Gastrocnemius medialis (tissue), 4 donors: ENCODE measurements at regions of chr16 and their contacts with region 1.

Region 1: DNA sequence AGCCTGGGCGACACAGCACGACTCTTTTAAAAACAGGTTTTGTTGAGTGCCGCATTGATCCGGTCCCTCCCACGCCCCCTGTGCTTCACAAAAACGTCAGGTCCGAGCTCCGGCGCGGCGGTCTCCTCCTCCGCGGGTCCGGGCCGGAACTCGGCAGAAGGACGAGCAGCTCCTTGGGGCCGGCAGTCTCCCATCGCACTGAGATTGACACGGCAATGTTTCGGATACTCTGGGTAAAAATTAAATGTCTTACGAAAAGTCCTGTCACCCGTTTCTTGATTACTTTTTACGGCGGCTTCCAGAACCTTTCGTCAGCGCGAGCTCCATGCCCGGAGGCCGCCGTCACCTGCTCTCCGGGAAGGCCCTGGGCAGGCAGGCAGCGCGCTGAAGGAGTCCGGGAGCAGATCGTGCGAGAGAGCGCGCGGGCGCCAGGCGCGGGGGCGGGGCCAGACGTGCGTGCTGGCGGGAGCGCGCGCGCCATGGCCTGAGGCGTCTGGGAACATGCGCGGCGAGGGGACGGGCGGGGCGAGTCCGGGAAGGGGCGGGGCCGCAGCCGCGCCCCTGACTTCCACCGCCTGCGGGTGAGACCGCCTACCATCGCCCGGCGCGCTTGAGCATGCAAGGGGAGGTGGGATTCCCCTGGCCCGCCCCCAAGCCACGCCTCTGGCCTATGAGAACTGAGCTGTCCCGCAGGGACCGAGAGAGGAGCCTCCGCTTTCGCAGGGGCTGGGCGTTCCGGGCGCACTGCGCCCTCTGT is 11.7 kb upstream of the SRL start:
- DNase-seq: peak; percentile 98 to 100
- ATAC-seq: peak; percentile 91 to 92
- H3K4me3 ChIP-seq: peak overlapping the region; percentile 72 to 77 (median 74)
- H3K27ac ChIP-seq: peak overlapping the region; percentile 94 to 96 (median 96)
- H3K4me1 ChIP-seq: peaks cover 9 to 15% of the 10 kb centered on the region in 2 donors
- H3K27me3 ChIP-seq: no peaks in the 10 kb centered on the region
- CTCF ChIP-seq: no peak
- POLR2A ChIP-seq: peak; percentile 87 to 88

Region 2: DNA sequence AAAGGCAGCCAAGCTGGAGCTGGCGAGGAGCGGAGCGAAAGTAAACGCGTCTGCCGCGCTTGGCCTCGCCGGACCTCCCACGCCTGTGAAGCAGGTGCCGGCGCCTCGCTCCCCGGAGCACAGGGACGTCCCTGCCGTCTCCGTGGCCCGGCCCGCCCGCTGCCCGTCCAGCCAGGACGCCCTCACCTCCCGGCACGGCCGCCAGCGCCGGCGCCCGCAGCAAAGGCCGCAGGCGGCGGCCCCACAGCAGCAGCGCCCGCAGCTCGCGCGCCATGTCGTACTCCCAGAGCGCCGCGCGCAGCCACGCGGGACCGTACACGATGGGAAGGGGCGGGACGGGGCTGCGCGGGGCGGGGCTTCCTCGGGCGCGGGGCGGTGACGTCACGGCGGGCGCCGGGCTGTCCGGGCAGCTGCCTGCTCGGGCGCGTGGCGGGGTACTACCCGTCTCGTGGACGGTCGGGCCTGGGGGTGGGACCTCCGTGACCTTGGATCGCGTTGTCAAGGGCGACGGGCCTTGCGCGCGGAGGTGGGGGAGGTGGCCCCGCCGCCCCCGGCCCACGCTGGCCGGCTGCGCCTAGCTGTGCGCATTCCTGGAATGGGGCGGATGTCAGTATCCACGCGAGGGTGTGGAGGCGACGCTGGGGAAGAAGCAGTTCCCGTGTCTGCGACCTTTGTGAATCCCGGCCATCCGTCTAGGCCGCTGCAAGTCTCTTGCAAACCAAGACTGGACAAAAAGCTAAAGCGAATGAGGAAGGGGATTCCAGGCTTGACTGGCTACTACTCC is 536.1 kb before region 1 on chr16 and contains the start of gene TRAP1:
- in situ Hi-C with region 1: no loop called
- intact Hi-C with region 1: loop called (anchors 10 kb)
- DNase-seq: peak; percentile 81 to 88
- ATAC-seq: peak; percentile 91 to 93
- H3K4me3 ChIP-seq: peak within 1 kb of the TSS; percentile 69 to 99 (median 78)
- H3K27ac ChIP-seq: peak within 1 kb of the TSS; percentile 88 to 96 (median 93)
- H3K4me1 ChIP-seq: peaks cover 12 to 17% of the 10 kb centered on the region in 2 donors
- H3K27me3 ChIP-seq: no peaks in the 10 kb centered on the region
- CTCF ChIP-seq: no peak
- POLR2A ChIP-seq: peak; percentile 87 to 91
- total RNA-seq, gene TRAP1: 103 to 140 (median 122) TPM

Region 3: GRCh38 chr16:4053301-4053845 is 200.2 kb before region 1 on chr16:
- in situ Hi-C with region 1: no loop called
- intact Hi-C with region 1: loop called (anchors 5 kb)
- DNase-seq: peak; percentile 94 to 97
- ATAC-seq: peak; percentile 85 to 88
- H3K4me3 ChIP-seq: peak overlapping the region; percentile 8 to 47 (median 42)
- H3K27ac ChIP-seq: peak overlapping the region; percentile 87 to 98 (median 90)
- H3K4me1 ChIP-seq: peaks cover 37 to 52% of the 10 kb centered on the region in 2 donors
- H3K27me3 ChIP-seq: no peaks in the 10 kb centered on the region
- CTCF ChIP-seq: no peak
- POLR2A ChIP-seq: peak in 1 of 2 donors; percentile 48

Region 4: DNA sequence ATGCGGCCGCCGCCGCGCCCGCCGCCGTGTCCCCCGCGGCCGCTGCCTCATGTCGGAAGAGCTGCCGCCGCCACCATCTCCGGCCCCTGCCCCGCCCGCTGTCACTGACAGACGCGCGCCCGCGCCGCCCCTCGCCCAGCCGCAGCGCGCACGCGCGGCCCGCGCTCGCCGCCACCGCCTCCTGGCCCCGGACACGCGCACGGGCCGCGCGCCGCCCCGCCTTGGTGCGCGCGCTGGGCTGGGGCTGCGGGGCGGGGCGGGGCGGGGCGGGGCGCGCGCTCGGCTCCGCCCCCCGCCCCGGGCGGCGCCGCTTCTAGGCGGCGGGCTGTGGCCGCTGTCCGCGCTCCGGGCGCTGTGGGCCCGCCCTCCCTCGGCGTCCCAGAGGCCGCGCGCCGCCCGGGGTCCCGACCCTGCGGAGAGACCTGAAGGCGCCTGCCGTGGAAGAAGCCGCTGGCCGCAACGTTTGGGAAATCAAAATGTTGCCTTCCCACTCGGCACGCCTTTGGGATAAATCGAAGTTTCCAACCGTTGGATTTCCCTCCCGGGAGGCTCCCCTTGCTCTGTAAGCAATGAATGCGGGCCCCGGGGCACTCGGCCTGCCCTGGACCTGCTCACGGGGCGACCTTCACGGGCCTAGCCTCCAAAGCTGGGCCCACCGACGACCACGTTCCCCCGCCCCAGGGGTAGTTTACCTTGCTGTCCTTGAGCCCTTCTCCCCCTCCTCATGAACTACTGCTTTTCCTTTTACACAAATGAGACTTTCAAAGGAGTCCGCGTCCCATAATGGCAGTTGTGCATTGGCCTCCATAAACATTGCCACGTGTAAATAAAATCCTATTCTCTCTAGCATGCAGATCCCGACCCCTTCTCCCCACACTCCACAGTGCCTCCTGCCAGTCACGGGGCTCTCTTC is 137.0 kb before region 1 on chr16 and contains the start of gene ADCY9:
- in situ Hi-C with region 1: loop called in 1 of 4 experiments (anchors 25 kb)
- intact Hi-C with region 1: loop called (anchors 5 kb)
- DNase-seq: peak; percentile 64 to 74
- ATAC-seq: peak; percentile 63 to 66
- H3K4me3 ChIP-seq: peak within 1 kb of the TSS; percentile 66 to 82 (median 72)
- H3K27ac ChIP-seq: peak within 1 kb of the TSS; percentile 83 to 93 (median 90)
- H3K4me1 ChIP-seq: peaks cover 37 to 42% of the 10 kb centered on the region in 2 donors
- H3K27me3 ChIP-seq: no peaks in the 10 kb centered on the region
- CTCF ChIP-seq: peak in 1 of 5 experiments; percentile 6
- POLR2A ChIP-seq: peak; percentile 81 to 88
- total RNA-seq, gene ADCY9: 84.9 to 223 (median 163) TPM

Region 5: DNA sequence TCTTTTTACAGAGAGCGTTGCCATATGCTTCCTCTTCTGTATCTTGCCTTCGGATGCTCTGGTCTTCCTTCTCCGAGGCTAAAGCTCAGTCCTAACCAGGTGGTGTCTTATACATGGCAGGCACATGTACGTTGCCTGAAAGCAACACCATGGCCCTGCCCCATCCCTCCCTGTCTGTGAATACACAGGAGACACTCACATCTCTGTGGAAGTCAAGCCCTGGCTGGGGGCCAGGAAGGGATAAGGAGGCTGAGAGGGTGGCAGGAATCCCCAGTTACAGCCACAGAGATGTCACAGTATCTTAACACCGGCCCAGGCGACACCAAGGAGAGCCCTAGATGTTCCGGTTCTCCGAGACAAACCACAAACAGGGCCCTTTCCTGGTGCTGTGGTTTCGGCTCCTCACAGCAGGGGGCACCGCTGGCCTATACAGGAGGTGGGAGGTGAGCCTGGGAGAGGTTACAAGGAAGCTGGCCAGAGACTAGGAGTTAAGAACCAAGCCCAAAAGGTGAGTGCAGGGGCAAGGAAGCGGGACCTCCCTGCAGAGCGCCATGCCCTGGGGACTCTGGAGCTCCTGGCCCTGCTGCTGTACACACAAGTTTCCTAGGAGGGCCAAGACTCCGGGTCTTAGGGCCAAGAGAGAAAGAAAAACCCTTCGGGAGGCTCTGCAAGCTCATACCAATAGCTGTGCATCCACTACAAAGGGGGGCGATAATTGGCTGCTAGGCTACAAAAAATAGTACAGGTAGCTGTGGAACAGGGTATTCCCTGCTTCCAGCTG is 53.4 kb before region 1 on chr16:
- in situ Hi-C with region 1: loop called in 3 of 4 experiments (anchors 5 to 10 kb)
- intact Hi-C with region 1: loop called (anchors 1 kb)
- DNase-seq: peak; percentile 39 to 55
- ATAC-seq: peak; percentile 47 to 74
- H3K4me3 ChIP-seq: no peak overlapping the region
- H3K27ac ChIP-seq: peak overlapping the region; percentile 91 to 100 (median 98)
- H3K4me1 ChIP-seq: peaks cover 3 to 15% of the 10 kb centered on the region in 2 donors
- H3K27me3 ChIP-seq: no peaks in the 10 kb centered on the region
- CTCF ChIP-seq: peak; percentile 58 to 80 (median 73)
- POLR2A ChIP-seq: no peak

Region 6: DNA sequence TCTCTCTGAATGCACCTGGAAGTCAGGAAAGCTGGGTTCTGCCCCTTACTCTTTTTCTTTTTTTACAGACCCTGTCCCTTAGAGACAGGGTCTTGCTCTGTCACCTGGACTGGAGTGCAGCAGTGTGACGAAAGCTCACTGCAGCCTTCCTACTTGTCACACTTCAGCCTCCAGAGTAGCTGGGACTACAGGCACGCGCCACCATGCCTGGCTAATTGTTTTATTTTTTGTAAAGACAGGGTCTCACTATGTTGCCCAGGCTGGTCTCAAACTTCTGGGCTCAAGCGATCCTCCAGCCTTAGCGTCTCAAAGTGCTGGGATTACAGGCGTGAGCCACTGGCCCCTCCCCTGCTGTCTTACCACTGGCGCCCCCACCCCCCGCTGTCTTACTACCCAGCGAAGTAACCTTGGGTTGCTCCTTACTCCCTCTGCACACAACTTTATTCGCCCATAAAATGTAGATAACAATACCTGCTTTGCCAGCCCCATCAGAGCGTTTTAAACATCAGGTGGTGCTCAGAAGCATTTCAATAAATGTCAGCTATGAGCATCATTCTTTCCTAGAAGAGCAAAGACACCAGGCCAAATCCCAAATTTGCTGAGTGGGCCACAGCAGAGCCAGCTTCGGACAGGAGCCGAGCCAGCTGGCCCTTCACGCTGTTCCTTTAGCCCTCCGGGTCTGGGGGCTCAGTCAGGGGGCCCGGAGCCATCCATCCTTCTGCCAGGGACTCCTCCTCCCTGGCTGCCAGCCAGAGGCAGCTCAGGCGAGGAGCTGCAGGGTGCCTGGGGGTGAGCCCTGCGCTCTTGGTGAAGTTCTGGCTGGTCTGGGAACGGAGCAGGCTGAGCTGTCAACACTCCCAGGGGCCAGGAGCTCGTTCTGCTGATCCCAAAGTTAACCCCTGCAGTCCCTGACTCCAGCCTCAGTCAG is 36.1 kb before region 1 on chr16:
- in situ Hi-C with region 1: no loop called
- intact Hi-C with region 1: no loop called
- DNase-seq: peak in 1 of 2 donors; percentile 84
- ATAC-seq: peak; percentile 16 to 22
- H3K4me3 ChIP-seq: peak overlapping the region; percentile 43 to 51 (median 48)
- H3K27ac ChIP-seq: peak overlapping the region; percentile 91 to 100 (median 98)
- H3K4me1 ChIP-seq: peaks cover 88 to 89% of the 10 kb centered on the region in 2 donors
- H3K27me3 ChIP-seq: no peaks in the 10 kb centered on the region
- CTCF ChIP-seq: no peak
- POLR2A ChIP-seq: peak; percentile 12 to 22

Region 7: DNA sequence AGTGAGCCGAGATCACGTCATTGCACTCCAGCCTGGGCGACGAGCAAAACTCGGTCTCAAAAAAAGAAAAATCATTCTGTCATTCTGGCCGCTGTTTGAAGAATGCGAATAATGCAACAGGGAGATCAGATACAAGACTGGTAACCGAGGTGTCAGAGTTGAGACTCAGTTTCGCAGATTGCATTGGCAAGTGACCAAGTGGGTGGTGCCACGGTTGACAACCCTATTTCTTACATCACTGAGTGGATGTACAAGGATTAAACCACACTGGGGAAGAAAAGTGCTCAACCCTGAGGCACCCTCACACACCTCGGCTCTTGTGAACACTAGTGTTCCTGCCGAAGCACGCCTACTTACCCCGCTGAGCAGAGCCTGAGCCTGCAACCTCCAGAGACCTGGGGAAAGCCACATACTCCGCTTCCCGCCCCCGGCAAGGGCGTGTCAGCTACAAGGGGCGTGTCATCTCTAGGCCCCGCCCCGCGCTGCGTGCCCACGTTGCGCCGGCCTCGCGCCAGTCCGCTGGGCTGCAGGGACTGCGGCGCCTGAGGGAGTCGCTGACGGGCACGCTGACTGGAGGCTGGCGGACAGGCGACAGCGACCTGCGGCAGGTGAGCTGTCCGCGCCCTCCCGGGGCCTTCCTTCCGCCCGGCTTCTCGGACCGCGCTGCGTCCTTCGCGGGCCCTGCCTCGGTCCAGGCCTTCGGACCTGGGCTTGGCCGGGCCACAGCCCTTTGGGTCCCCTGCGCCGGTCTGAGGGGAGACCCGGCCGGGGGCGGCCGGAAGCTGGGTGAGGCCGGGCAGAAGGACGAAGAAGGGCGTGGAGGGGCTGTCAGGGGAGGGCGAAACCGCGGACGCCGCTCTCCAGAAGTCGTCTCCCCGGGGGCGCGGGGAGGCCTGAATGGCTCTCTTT is 222.6 kb after region 1 on chr16 and contains the start of gene HMOX2:
- in situ Hi-C with region 1: no loop called
- intact Hi-C with region 1: no loop called
- DNase-seq: peak; percentile 88 to 91
- ATAC-seq: peak; percentile 90 to 91
- H3K4me3 ChIP-seq: peak within 1 kb of the TSS; percentile 84 to 99 (median 89)
- H3K27ac ChIP-seq: peak within 1 kb of the TSS; percentile 85 to 96 (median 89)
- H3K4me1 ChIP-seq: peaks cover 11 to 22% of the 10 kb centered on the region in 2 donors
- H3K27me3 ChIP-seq: peaks cover 0 to 12% (median 12%) of the 10 kb centered on the region in 3 donors
- CTCF ChIP-seq: peak in 4 of 5 experiments; percentile 24 to 47 (median 36)
- POLR2A ChIP-seq: peak; percentile 84 to 88
- total RNA-seq, gene HMOX2: 21.7 to 30.0 (median 28.4) TPM

Region 8: DNA sequence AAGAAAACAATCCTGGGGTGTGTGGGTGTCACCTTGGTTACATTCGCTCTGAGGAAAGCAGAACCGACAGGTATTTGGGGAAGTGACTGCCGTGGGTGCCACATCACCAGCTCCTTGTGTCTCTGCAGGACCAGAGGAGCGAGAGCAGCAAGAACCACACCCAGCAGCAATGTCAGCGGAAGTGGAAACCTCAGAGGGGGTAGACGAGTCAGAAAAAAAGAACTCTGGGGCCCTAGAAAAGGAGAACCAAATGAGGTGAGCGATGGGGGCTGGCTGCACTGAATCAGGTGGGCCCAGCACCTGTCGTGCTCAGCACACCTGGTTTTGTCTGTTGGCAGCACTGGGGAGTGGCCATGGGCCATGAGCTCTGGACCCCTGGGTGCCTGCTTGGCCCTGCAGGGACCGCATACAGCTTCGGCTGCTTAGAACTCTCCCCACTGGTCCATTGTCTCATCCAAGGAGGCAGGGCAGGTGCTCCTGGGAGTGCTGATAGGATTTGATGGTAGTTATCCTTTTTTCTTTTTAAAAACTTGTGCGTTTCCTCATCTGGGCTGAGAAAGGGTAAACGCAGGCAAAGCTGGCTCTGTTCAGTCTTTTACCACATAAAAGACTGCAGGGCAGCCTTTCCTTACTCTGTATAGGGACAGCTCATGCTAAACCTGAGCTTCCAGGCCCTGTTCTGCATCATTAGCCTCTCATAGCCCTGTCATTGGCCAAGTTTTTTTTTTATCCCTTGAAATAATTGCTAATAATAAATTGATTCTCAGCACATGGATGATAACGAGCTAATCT is 252.0 kb after region 1 on chr16:
- in situ Hi-C with region 1: no loop called
- intact Hi-C with region 1: no loop called
- DNase-seq: no peak
- ATAC-seq: no peak
- H3K4me3 ChIP-seq: no peak overlapping the region
- H3K27ac ChIP-seq: no peak overlapping the region
- H3K4me1 ChIP-seq: peaks cover 12 to 21% of the 10 kb centered on the region in 2 donors
- H3K27me3 ChIP-seq: no peaks in the 10 kb centered on the region
- CTCF ChIP-seq: no peak
- POLR2A ChIP-seq: no peak